ENCODE measurements at regions of chr3 and their contacts with region 1.

Region 1: GRCh38 chr3:49786241-49786958 is at the start of gene IP6K1:
- DNase-seq: peak; percentile 99
- ATAC-seq: peak; percentile 93
- H3K4me3 ChIP-seq: peak within 1 kb of the TSS; percentile 81 to 93 (median 84)
- H3K27ac ChIP-seq: peak within 1 kb of the TSS; percentile 65
- H3K4me1 ChIP-seq: peaks cover 52% of the 10 kb centered on the region
- H3K27me3 ChIP-seq: no peaks in the 10 kb centered on the region; a peak in 1 of 5 replicates
- CTCF ChIP-seq: 0 out of 2 replicates have a peak, but pooled peaks have one; percentile 17
- EP300 ChIP-seq: 0 out of 4 replicates have a peak, but pooled peaks of 1 of the 2 experiments have one; percentile 36
- POLR2A ChIP-seq: peak; percentile 68 to 94
- RAD21 ChIP-seq: no peak
- total RNA-seq, gene IP6K1: 17.7 and 20.0 TPM in 2 replicates

Region 2: DNA sequence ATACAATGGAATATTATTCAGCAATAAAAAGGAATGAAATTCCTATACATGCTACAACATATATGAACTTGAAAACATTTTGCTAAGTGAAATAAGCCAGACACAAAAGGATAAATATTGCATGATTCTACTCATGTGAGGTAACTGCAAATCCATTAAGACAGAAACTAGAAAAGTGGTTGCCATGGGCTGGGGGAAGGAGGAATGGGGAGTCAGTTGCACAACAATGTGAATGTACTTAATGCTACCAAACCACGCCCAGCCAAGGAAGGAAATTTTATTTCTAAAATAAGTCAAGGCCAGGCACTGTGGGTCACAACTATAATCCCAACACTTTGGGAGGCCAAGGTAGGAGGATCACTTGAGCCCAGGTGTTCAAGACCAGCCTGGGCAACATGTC is 52.8 kb before region 1 on chr3:
- CTCF ChIA-PET with region 1: no interaction called
- POLR2A ChIA-PET with region 1: interaction called, 3 read pairs
- in situ Hi-C with region 1: no loop called
- intact Hi-C with region 1: loop called (anchors 5 kb)
- DNase-seq: no peak
- ATAC-seq: no peak
- H3K4me3 ChIP-seq: no peak overlapping the region
- H3K27ac ChIP-seq: no peak overlapping the region
- H3K4me1 ChIP-seq: peaks cover 20% of the 10 kb centered on the region
- H3K27me3 ChIP-seq: no peaks in the 10 kb centered on the region
- CTCF ChIP-seq: no peak
- EP300 ChIP-seq: no peak
- POLR2A ChIP-seq: no peak
- RAD21 ChIP-seq: no peak

Region 3: DNA sequence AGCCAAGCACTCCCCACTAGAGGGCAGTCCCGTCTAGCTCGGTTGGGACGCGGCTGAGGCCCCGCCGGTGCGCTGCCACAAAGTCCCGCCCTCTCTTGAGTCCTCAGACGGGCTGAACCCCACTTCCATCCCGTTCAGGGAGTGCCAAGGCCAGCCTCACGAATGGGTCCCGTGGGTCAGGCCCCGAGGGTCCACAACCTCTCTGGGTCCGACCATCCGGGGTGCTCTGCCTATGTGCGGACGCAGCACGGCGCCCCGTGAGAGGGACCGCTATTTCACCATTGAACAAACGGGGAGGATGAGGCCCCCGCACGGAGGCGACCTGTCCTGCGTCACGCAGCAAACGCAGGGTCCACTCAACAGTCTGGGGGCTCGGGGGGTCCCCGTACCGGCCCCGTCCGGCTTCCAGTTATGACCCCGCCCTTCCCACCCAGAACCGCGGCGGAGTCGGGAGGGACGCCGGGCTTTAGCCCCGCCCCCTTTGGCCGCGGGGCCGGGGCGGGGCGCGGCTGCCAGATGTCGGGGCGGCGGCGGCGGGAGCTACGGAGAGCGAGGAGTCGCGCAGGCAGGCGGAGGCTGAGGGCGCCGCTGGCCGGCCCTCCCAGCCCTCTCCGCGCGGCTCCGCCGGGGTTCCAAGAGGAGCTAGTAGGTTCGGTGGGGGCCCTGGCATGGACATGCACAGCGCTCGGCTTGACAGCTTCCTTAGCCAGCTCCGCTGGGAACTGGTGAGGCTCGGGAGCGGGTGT is 16.5 kb after region 1 on chr3 and contains the start of gene INKA1:
- CTCF ChIA-PET with region 1: no interaction called
- POLR2A ChIA-PET with region 1: interaction called, 22 read pairs
- in situ Hi-C with region 1: no loop called
- intact Hi-C with region 1: no loop called
- DNase-seq: peak; percentile 75
- ATAC-seq: peak; percentile 77
- H3K4me3 ChIP-seq: peak within 1 kb of the TSS; percentile 73 to 89 (median 85)
- H3K27ac ChIP-seq: no peak within 1 kb of the TSS
- H3K4me1 ChIP-seq: peaks cover 78% of the 10 kb centered on the region
- H3K27me3 ChIP-seq: peaks cover 0 to 12% of the 10 kb centered on the region in 2 experiments; a peak in 3 of 5 replicates
- CTCF ChIP-seq: peak; percentile 100
- EP300 ChIP-seq: no peak
- POLR2A ChIP-seq: no peak
- RAD21 ChIP-seq: peak; percentile 98
- total RNA-seq, gene INKA1: 0.22 TPM in 1 of 2 replicates, not detected in the other

Region 4: GRCh38 chr3:49813497-49814174 is 27.2 kb after region 1 on chr3 and contains the start of gene UBA7:
- CTCF ChIA-PET with region 1: no interaction called
- POLR2A ChIA-PET with region 1: interaction called, 14 read pairs
- in situ Hi-C with region 1: no loop called
- intact Hi-C with region 1: no loop called
- DNase-seq: peak; percentile 74
- ATAC-seq: peak; percentile 95
- H3K4me3 ChIP-seq: peak within 1 kb of the TSS; percentile 48 to 67 (median 56)
- H3K27ac ChIP-seq: peak within 1 kb of the TSS; percentile 64
- H3K4me1 ChIP-seq: peaks cover 17% of the 10 kb centered on the region
- H3K27me3 ChIP-seq: no peaks in the 10 kb centered on the region
- CTCF ChIP-seq: 0 out of 2 replicates have a peak, but pooled peaks have one; percentile 9
- EP300 ChIP-seq: no peak
- POLR2A ChIP-seq: peak; percentile 34 to 45; a peak in 1 of 4 replicates
- RAD21 ChIP-seq: no peak
- total RNA-seq, gene UBA7: 5.8 and 9.5 TPM in 2 replicates

Measured in HepG2 (cell line).